BJ (cell line): ENCODE measurements at regions of chr1 and their contacts with region 1.

Region 1: DNA sequence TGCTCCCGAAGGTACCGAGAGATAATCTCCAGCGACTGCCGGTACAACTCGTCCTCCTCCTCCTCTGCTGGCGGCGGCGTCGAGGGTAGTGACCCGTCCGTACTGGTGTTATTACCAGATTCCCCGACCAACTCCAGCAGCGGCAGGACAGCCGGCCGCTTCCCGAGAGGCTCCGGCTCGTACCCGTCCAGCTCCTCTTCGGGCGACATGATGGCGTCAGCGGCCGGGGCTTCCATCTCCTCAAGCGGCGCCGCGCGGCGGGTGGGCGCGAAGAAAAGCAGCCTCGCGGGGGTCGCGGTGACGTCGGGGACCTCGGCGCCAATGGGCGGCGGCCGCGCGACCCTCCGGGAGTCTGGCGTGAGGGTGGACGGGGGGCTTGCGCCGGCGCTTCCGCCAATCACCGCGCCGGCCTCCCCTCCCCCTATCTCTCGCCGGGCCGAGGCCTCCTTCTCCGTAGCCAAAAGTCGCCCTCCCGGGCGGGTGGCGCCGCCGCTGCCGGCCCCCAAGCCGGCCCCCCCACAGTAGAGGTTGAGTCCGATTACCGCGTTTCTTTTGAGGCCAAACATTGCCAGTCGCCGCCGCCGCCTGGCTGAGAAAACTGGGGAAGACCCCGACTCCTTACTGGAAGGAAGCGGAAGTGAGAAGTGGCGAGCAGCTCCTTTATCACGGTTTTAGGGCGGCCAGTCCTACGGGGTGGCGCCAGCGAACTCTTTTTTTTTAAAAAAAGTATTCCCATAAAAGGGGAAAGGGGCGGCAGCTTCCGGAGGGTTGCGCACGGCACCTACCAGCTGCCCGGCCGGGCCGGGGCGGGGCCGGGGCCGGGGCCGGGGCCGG is at the start of gene MCL1:
- DNase-seq: peak; percentile 79
- H3K4me3 ChIP-seq: peak within 1 kb of the TSS; percentile 74
- H3K27me3 ChIP-seq: no peaks in the 10 kb centered on the region
- CTCF ChIP-seq: 0 out of 2 replicates have a peak, but pooled peaks have one; percentile 11
- polyA plus RNA-seq, gene MCL1: 45.4 and 80.5 TPM in 2 replicates

Region 2: DNA sequence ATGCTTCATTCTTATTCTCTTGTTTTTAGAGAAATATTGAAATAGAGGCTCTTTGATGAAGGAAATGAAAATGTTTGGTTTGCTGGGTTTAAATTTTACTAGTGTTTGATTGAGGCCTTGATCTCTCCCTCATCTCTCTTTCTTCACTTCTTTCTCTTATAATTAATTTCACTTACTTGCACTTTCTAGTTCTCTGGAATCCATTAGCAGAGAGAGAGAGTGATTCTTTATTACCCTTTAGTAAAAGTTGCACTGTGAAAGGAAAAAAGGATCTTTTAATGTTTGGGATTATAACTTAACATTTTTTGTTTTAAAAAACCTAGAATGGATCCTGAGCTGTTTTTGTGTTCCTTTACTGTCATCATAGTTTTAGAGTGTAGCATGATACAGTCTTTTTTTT is 203.1 kb before region 1 on chr1:
- CTCF ChIA-PET with region 1: no interaction called
- POLR2A ChIA-PET with region 1: no interaction called
- DNase-seq: no peak
- H3K4me3 ChIP-seq: no peak overlapping the region
- H3K27me3 ChIP-seq: no peaks in the 10 kb centered on the region
- CTCF ChIP-seq: no peak

Region 3: GRCh38 chr1:150456146-150456647 is 123.0 kb before region 1 on chr1:
- CTCF ChIA-PET with region 1: no interaction called
- POLR2A ChIA-PET with region 1: interaction called, 14 read pairs
- DNase-seq: no peak
- H3K4me3 ChIP-seq: no peak overlapping the region
- H3K27me3 ChIP-seq: no peaks in the 10 kb centered on the region
- CTCF ChIP-seq: no peak

Region 4: GRCh38 chr1:150567717-150568593 is 11.2 kb before region 1 on chr1:
- CTCF ChIA-PET with region 1: interaction called, 5 read pairs
- POLR2A ChIA-PET with region 1: interaction called, 22 read pairs
- DNase-seq: peak; percentile 98
- H3K4me3 ChIP-seq: 0 out of 2 replicates have a peak overlapping the region, but pooled peaks have one; percentile 14
- H3K27me3 ChIP-seq: no peaks in the 10 kb centered on the region
- CTCF ChIP-seq: no peak

Region 5: DNA sequence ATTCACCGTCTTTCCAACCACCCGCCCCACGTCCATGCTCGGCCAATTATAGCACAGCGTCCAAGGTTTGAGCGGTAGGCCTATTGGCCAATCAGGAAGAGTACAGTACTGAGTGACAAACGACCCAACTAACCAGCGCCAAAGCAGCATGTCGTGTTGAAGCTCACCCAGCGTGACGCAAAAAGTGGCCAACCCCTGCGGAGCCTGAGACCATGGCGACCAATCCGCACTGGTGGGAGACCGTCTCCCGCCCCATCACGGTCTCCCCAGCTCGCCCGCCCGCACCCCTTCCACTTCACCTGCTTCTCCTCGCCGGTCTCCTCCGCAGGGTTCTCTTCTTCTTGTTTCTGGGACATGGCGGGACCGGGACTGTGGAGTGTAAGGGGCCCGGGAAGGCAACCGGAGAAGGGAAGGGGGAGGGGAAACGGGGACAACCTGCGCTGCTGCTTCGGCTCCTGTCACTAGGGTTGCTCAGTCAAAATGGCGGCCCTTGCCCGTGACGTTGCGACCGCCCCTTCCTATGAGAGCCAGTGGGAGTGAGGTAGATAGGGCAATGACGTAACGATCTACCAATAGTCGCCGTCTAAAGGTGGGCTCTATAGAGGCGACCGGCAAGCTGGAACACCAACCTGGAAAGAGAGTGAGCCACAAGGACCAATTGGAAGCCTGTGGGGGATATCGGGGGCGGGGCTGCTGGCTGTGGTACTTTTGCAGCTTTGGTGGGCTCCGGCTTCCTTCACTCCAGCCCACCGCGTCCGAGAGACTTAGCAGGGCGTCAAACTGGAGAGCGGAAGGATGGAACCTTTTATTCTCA is 50.1 kb after region 1 on chr1 and contains the start of gene ENSA:
- CTCF ChIA-PET with region 1: no interaction called
- POLR2A ChIA-PET with region 1: interaction called, 10 read pairs
- DNase-seq: peak; percentile 99
- H3K4me3 ChIP-seq: peak within 1 kb of the TSS; percentile 74
- H3K27me3 ChIP-seq: no peaks in the 10 kb centered on the region
- CTCF ChIP-seq: no peak
- polyA plus RNA-seq, gene ENSA: 35.8 and 47.2 TPM in 2 replicates

Region 6: DNA sequence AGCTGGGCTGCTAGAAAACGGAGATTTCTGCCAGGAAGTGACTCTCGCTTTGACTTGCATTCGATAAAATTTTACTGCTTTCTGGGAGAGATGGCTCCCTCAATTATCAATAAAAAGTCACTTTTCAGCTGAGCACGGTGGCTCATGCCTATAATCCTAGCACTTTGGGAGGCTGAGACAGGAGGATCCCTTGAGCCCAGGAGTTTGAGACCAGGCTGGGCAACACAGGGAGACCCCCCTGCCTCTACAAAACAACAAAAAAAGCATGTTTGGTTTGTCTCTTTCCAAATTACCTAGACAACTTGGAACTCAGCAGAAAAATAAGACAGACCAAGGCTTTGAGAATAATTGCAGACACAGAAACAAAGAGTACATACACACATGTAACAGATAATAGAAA is 63.1 kb after region 1 on chr1:
- CTCF ChIA-PET with region 1: no interaction called
- POLR2A ChIA-PET with region 1: no interaction called
- DNase-seq: no peak
- H3K4me3 ChIP-seq: no peak overlapping the region
- H3K27me3 ChIP-seq: no peaks in the 10 kb centered on the region
- CTCF ChIP-seq: no peak